Calu3 (cell line): ENCODE measurements at regions of chr5 and their contacts with region 1.

Region 1: GRCh38 chr5:180097163-180097892 is 25.8 kb upstream of the RNF130 start:
- DNase-seq: no peak
- H3K4me3 Mint-ChIP-seq: no peak overlapping the region
- H3K27ac Mint-ChIP-seq: no peak overlapping the region
- H3K4me1 Mint-ChIP-seq: no peaks in the 10 kb centered on the region
- H3K27me3 Mint-ChIP-seq: peaks cover 52% of the 10 kb centered on the region
- CTCF ChIP-seq: no peak

Region 2: GRCh38 chr5:179795863-179796833 is 301.2 kb before region 1 on chr5:
- CTCF ChIA-PET with region 1: interaction called, 11 read pairs
- intact Hi-C with region 1: no loop called
- DNase-seq: peak; percentile 95
- H3K4me3 Mint-ChIP-seq: peak overlapping the region; percentile 72
- H3K27ac Mint-ChIP-seq: peak overlapping the region; percentile 87
- H3K4me1 Mint-ChIP-seq: peaks cover 16% of the 10 kb centered on the region
- H3K27me3 Mint-ChIP-seq: no peaks in the 10 kb centered on the region
- CTCF ChIP-seq: peak; percentile 79

Region 3: DNA sequence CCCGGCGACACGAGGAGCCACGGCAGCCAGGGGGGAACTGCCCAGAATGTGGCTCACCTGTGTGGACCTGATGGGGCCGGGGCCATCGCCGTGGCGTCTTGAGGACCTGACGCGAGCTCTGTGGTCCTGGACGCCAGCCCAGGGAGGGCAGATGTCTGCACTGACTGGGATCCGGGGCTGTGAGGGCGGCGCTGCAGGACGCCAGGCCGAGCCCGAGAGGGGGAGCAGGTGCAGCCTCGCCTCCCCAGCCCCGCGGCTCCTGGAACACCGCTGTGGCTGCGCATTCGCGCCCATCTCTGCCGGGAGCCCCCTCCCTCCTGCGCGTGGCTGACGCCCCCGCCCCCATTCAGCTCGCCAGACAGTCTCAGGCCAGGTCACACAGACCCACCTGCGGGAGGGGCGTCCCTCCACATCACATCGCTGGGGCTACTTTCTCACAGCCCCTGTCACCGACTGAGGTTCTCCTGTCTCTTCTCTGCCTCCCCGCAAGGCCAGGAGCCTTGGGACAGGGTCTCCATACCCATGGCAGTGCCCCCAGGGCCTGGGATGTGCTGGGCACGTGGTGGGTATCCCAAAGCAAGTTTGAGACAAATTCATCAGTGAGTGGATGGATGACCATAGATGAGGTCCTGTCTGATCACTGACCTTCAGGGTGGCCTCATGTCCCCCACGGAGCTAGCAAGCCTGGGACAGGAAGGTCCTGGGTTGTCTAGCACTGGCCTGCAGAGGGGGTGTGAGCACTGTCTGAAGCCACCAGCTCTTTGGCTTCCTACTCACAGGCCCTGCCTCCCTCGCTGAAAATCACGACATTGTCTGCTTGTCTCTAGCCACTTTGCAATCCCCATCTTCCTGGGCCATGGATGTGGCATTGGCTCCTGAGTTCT is 64.3 kb after region 1 on chr5:
- CTCF ChIA-PET with region 1: no interaction called
- intact Hi-C with region 1: no loop called
- DNase-seq: no peak
- H3K4me3 Mint-ChIP-seq: no peak overlapping the region
- H3K27ac Mint-ChIP-seq: no peak overlapping the region
- H3K4me1 Mint-ChIP-seq: peaks cover 7% of the 10 kb centered on the region
- H3K27me3 Mint-ChIP-seq: peaks cover 59% of the 10 kb centered on the region
- CTCF ChIP-seq: no peak